ENCODE measurements at regions of chr12 and their contacts with region 1.

Region 1: GRCh38 chr12:100200463-100201181 is at the start of gene ACTR6:
- DNase-seq: peak; percentile 96
- H3K4me3 ChIP-seq: peak within 1 kb of the TSS; percentile 77 to 79
- H3K27ac ChIP-seq: peak within 1 kb of the TSS; percentile 82 to 86
- H3K4me1 ChIP-seq: peaks cover 3% of the 10 kb centered on the region
- H3K27me3 ChIP-seq: no peaks in the 10 kb centered on the region
- CTCF ChIP-seq: peak in 1 of 4 experiments; percentile 20
- POLR2A ChIP-seq: peak; percentile 47
- total RNA-seq, gene ACTR6: 10.3 to 32.6 TPM

Region 2: DNA sequence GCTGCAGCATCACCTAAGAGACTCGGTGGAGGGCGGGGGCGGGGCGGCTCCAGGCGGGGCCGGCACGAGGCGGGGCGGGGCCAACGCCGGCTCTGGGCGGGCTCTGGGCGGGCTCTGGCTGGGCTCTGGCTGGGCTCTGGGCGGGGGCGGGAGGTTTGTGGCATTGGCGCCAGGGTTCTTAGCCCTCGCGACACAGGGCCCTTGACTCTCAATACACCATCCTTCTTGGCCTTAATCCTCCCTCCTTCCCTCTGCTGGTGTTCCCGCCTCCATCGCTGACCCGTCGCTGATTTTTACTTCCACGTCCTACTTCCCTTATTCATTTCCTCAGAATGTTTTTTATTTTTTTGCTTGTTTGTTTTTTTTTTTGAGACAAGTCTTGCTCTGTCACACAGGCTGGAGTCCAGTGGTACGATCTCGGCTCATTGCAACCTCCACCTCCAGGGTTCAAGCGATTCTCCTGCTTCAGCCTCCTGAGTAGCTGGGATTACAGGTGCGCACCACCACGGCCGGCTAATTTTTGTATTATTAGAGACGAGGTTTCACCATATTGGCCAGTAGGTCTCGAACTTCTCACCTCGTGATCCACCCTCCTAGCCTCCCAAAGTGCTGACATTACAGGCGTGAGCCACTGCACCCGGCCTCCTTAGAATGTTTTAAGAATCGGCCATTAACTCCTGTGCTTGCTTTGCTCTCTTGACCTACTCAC is 57.6 kb before region 1 on chr12 and contains the start of gene BLTP3B:
- intact Hi-C with region 1: loop called (anchors 5 kb)
- DNase-seq: peak; percentile 90
- H3K4me3 ChIP-seq: peak within 1 kb of the TSS; percentile 74 to 82
- H3K27ac ChIP-seq: peak within 1 kb of the TSS; percentile 93 to 94
- H3K4me1 ChIP-seq: no peaks in the 10 kb centered on the region
- H3K27me3 ChIP-seq: no peaks in the 10 kb centered on the region
- CTCF ChIP-seq: no peak
- POLR2A ChIP-seq: no peak
- total RNA-seq, gene BLTP3B: 20.4 to 24.8 TPM